Left lung (tissue), 14 donors: ENCODE measurements at regions of chr9 and their contacts with region 1.

Region 1: GRCh38 chr9:112743216-112743836 is 7.2 kb upstream of the SNX30 start:
- DNase-seq: no peak
- ATAC-seq: no peak
- H3K4me3 ChIP-seq: no peak overlapping the region
- H3K27ac ChIP-seq: no peak overlapping the region
- H3K4me1 ChIP-seq: no peaks in the 10 kb centered on the region
- H3K27me3 ChIP-seq: no peaks in the 10 kb centered on the region
- CTCF ChIP-seq: no peak

Region 2: GRCh38 chr9:112819635-112820496 is 76.5 kb after region 1 on chr9:
- intact Hi-C with region 1: loop called in 1 of 2 experiments (anchors 10 kb)
- DNase-seq: peak in 2 of 4 donors; percentile 47 to 65
- ATAC-seq: peak; percentile 86
- H3K4me3 ChIP-seq: no peak overlapping the region
- H3K27ac ChIP-seq: no peak overlapping the region
- H3K4me1 ChIP-seq: peaks cover 18 to 34% of the 10 kb centered on the region in 2 donors
- H3K27me3 ChIP-seq: no peaks in the 10 kb centered on the region
- CTCF ChIP-seq: peak; percentile 48 to 59

Region 3: DNA sequence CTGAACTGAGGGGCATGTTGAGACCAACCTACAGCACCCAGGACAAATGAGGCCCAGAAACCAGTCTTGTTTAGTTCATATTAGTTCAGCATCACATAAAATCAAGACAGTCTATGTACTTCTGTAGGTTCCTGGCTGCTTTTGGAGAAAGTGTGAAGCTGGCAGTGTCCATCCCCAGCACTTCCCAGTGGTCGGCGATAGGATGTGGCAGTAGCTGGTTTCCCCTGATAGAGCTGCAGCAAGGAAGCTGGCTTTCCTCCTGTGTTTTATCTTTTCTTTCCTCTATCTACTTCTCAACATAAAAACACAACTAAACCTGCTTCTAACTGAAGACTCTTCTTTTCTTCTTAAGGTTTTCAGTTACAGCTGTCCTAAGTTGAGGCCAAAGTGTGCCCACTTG is 190.4 kb after region 1 on chr9:
- intact Hi-C with region 1: no loop called
- DNase-seq: no peak
- ATAC-seq: no peak
- H3K4me3 ChIP-seq: no peak overlapping the region
- H3K27ac ChIP-seq: no peak overlapping the region
- H3K4me1 ChIP-seq: no peaks in the 10 kb centered on the region
- H3K27me3 ChIP-seq: peaks cover 0 to 6% of the 10 kb centered on the region in 2 donors
- CTCF ChIP-seq: no peak